ENCODE measurements at regions of chr3 and their contacts with region 1.

Region 1: GRCh38 chr3:177478170-177478860 is 281.0 kb upstream of the TBL1XR1 start:
- DNase-seq: peak; percentile 84 to 100
- H3K4me3 ChIP-seq: no peak overlapping the region
- H3K27ac ChIP-seq: peak overlapping the region; percentile 85
- H3K4me1 ChIP-seq: peaks cover 33% of the 10 kb centered on the region
- H3K27me3 ChIP-seq: no peaks in the 10 kb centered on the region
- CTCF ChIP-seq: no peak

Region 2: DNA sequence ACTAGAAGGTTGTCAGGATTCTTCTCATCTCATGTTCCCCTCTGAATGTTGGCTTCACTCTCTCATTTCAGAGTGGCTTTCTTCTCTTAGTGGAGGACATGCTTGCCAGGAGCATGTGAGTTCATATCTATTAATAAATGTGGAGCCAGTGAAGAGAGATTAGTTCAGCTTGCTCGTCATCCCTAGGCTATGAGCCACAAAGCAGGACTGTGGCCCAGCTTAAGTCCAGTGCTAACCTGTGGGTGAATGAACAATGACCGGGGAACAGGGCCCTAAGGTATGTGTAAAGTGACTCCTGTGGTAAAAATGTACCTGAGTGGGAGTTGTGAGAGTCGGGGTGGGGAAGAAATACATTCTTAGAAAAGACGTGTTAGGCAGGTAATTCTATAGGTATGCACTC is 184.1 kb before region 1 on chr3:
- CTCF ChIA-PET with region 1: no interaction called
- POLR2A ChIA-PET with region 1: no interaction called
- intact Hi-C with region 1: loop called (anchors 2 kb)
- DNase-seq: peak; percentile 69 to 71
- H3K4me3 ChIP-seq: no peak overlapping the region
- H3K27ac ChIP-seq: peak overlapping the region; percentile 57; the same call in 1 of the 2 replicates
- H3K4me1 ChIP-seq: peaks cover 23% of the 10 kb centered on the region
- H3K27me3 ChIP-seq: no peaks in the 10 kb centered on the region
- CTCF ChIP-seq: no peak

Region 3: DNA sequence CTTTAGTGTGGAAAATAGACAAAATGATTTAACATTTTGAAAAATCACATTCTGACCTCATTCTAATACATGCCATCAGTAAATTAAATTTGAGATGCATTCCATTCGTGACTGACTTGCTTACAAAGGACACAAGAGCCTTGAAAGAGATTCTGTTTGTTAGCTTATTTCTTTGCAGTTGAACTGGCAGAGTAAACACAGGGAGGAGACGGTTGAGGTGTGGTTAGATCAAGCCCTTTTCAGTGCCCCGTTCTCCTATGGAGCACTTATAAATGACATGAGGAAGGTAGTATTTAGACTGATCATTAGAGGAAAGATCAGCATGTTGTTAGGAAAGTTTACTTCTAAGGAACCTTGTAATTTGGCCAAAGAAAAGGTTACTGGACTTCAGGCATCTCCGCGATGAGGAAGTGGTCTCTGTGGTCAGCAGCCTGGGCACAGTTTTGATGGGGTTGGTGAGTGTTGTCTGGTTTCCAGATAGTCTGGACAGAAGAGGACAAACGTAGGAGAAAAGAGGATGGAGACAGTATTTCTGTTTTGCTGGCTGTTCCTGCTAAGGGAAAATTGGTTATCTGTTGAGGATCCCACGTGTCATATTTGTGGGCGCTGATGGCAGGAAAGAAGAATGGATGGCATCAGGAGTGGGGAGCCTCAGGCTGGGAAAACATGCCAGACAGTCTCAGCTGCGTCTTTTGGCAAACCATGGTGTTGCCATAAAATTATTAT is 47.8 kb after region 1 on chr3:
- CTCF ChIA-PET with region 1: no interaction called
- POLR2A ChIA-PET with region 1: interaction called, 3 read pairs
- intact Hi-C with region 1: loop called (anchors 1 kb)
- DNase-seq: peak; percentile 25 to 87
- H3K4me3 ChIP-seq: no peak overlapping the region
- H3K27ac ChIP-seq: no peak overlapping the region
- H3K4me1 ChIP-seq: peaks cover 79% of the 10 kb centered on the region
- H3K27me3 ChIP-seq: no peaks in the 10 kb centered on the region
- CTCF ChIP-seq: no peak

Region 4: DNA sequence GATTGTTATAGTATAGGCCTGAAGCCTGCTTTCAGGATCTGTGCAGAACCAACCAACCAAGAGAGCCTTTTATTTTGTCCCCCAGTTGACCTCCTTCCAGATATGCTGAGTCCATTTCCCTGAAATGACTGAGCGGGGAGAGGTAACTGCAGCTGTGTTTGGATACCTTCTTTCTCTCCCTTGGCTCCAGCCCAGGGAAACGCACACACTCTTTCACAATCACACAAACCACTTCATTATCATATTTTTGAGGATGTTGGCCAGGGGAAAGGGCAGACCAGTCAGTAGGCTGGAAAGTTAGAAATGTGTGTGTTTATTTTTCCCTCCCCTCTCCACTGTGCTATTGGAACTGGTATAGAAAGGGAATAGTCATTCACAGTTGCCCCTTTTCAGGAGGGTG is 136.7 kb after region 1 on chr3:
- CTCF ChIA-PET with region 1: no interaction called
- POLR2A ChIA-PET with region 1: no interaction called
- intact Hi-C with region 1: loop called (anchors 5 kb)
- DNase-seq: peak; percentile 84 to 96
- H3K4me3 ChIP-seq: no peak overlapping the region
- H3K27ac ChIP-seq: peak overlapping the region; percentile 62
- H3K4me1 ChIP-seq: peaks cover 87% of the 10 kb centered on the region
- H3K27me3 ChIP-seq: no peaks in the 10 kb centered on the region
- CTCF ChIP-seq: no peak

Region 5: GRCh38 chr3:178182337-178182779 is 704.0 kb after region 1 on chr3:
- CTCF ChIA-PET with region 1: no interaction called
- POLR2A ChIA-PET with region 1: no interaction called
- intact Hi-C with region 1: no loop called
- DNase-seq: no peak
- H3K4me3 ChIP-seq: no peak overlapping the region
- H3K27ac ChIP-seq: no peak overlapping the region
- H3K4me1 ChIP-seq: no peaks in the 10 kb centered on the region
- H3K27me3 ChIP-seq: no peaks in the 10 kb centered on the region
- CTCF ChIP-seq: no peak